Sigmoid colon (tissue), 7 donors: ENCODE measurements at regions of chr11 and their contacts with region 1.

Region 1: DNA sequence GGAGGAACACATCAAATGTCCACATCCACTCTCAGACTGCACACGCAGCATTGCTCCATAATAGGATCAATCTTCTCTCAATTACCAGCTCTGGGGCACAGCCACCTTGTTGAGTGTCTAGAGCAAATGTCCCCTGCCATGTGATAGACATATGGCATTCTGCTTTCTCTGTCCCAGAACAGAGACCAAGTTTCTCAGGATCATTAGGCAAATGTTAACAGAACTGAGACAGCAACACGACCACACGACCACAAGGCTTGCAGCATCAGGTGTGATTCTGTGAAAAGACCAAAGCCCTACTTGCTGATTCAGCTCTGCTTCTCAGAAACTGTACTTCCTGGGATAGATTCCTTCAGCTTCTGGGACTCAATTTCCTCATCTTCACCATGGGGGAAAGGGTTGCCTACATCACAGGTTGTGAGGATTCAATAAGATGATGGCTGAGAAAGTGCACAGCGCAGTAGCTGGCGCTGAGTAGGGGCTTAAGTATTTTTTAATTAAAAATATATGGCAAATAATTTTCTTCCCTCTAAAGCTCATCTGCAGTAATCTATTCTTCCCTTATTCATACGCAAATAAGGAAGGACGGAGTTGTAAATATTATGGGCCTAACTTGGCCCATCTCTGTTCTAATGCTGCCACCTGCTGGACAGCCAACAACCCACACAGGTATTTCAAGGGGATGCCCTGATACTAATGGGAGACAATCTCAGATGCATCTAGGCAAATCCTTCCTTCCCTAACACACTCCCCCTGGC is 54.3 kb upstream of the USP47 start:
- DNase-seq: peak; percentile 85
- H3K4me3 ChIP-seq: no peak overlapping the region
- H3K27ac ChIP-seq: peak overlapping the region in 1 of 4 donors; percentile 9
- H3K4me1 ChIP-seq: peaks cover 0 to 3% (median 0%) of the 10 kb centered on the region in 4 donors
- H3K27me3 ChIP-seq: no peaks in the 10 kb centered on the region
- CTCF ChIP-seq: peak; percentile 87 to 92 (median 88)
- EP300 ChIP-seq: no peak
- POLR2A ChIP-seq: no peak

Region 2: GRCh38 chr11:10792398-10792975 is 995.0 kb before region 1 on chr11:
- intact Hi-C with region 1: loop called (anchors 2 kb)
- DNase-seq: peak; percentile 92
- H3K4me3 ChIP-seq: peak overlapping the region in 1 of 4 donors; percentile 8
- H3K27ac ChIP-seq: no peak overlapping the region
- H3K4me1 ChIP-seq: peaks cover 0 to 10% (median 3%) of the 10 kb centered on the region in 4 donors
- H3K27me3 ChIP-seq: no peaks in the 10 kb centered on the region
- CTCF ChIP-seq: peak; percentile 84 to 94 (median 92)
- EP300 ChIP-seq: no peak
- POLR2A ChIP-seq: no peak

Region 3: DNA sequence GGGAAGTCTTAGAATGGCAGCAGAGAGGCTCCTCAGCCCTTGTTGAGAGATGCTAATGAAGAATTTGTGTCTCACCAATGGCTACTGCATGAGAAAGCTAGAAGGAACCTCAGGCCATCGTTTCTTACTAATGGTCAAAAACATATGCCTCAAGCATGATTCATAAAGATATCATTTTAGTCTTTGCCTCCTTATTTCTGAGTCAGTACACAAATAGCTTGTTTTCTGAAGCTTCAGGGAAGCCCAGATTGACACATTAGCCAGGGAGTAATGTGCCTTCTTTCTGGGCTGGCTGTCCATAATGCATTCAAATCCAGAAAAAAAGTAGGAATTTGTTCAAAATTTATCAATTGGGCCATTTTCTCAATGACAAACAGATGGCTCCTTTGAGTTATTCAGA is 760.2 kb before region 1 on chr11:
- intact Hi-C with region 1: loop called (anchors 2 kb)
- DNase-seq: no peak
- H3K4me3 ChIP-seq: no peak overlapping the region
- H3K27ac ChIP-seq: no peak overlapping the region
- H3K4me1 ChIP-seq: peaks cover 0 to 21% (median 13%) of the 10 kb centered on the region in 4 donors
- H3K27me3 ChIP-seq: no peaks in the 10 kb centered on the region
- CTCF ChIP-seq: no peak
- EP300 ChIP-seq: no peak
- POLR2A ChIP-seq: no peak

Region 4: DNA sequence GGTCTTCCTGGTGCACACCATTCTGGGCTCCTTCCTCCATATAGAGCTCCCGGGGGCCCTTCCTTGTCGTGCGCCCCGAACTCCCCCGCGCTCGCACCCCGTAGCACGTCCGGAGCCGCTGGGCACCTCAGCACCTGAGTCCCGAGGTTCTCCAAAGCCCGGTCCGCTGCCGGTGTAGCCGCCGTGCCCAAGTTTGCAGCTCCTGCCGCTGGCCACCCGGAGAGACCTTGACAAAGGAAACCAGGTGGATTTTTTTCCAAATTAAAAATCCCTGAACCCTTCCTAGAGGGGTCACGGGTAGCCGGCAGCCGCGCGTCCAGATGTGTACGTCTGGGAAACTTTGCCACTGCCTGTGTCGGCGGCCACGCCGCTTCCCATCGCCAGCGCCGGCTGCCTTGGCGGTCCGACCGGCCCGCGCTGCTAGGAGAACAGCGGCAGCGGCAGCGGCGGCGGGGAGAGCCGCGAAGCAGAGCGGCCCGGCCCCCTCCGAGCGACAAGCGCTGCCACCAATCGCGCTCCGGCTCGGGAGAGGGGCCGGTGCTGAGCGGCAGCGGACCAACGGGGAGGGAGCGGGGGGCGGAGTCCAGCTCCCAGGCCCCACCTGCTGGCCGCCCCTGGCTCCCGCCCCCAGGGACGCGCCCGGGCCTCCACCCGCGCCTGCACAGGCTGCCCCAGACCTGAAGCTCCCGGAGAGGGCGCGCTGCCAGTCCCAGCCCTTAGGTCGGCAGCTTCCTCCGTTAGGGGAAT is 165.7 kb before region 1 on chr11 and contains the start of gene GALNT18:
- intact Hi-C with region 1: loop called (anchors 2 kb)
- DNase-seq: peak; percentile 97
- H3K4me3 ChIP-seq: peak within 1 kb of the TSS; percentile 64 to 85 (median 77)
- H3K27ac ChIP-seq: peak within 1 kb of the TSS; percentile 85 to 93 (median 88)
- H3K4me1 ChIP-seq: peaks cover 0 to 54% (median 49%) of the 10 kb centered on the region in 4 donors
- H3K27me3 ChIP-seq: no peaks in the 10 kb centered on the region
- CTCF ChIP-seq: peak in 2 of 4 experiments; percentile 50 to 54
- EP300 ChIP-seq: no peak
- POLR2A ChIP-seq: peak in 1 of 2 donors; percentile 73
- total RNA-seq, gene GALNT18: 34.9 to 48.6 (median 39.8) TPM

Region 5: DNA sequence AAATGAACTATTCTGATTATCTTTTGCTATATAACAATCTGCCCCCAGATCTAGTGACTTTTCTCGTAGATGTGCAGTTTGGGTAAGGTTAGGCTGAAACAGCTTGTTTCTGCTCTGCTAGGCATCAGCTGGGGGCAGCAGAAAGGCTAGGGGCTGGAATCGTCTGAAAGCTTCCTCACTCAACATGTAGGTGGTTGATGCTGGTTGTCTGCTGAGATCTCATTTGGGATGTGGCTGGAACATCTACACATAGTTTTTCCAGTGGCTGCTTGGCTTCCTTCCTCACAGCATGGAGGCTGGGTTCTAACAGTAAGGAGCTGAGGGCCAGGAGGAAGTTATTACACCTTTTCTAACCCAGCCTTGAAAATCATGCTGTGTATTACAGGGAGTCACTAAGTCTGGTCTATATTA is 84.5 kb after region 1 on chr11:
- intact Hi-C with region 1: no loop called
- DNase-seq: no peak
- H3K4me3 ChIP-seq: no peak overlapping the region
- H3K27ac ChIP-seq: no peak overlapping the region
- H3K4me1 ChIP-seq: peaks cover 0 to 40% (median 25%) of the 10 kb centered on the region in 4 donors
- H3K27me3 ChIP-seq: no peaks in the 10 kb centered on the region
- CTCF ChIP-seq: no peak
- EP300 ChIP-seq: no peak
- POLR2A ChIP-seq: no peak